ENCODE measurements at regions of chr2 and their contacts with region 1.

Region 1: DNA sequence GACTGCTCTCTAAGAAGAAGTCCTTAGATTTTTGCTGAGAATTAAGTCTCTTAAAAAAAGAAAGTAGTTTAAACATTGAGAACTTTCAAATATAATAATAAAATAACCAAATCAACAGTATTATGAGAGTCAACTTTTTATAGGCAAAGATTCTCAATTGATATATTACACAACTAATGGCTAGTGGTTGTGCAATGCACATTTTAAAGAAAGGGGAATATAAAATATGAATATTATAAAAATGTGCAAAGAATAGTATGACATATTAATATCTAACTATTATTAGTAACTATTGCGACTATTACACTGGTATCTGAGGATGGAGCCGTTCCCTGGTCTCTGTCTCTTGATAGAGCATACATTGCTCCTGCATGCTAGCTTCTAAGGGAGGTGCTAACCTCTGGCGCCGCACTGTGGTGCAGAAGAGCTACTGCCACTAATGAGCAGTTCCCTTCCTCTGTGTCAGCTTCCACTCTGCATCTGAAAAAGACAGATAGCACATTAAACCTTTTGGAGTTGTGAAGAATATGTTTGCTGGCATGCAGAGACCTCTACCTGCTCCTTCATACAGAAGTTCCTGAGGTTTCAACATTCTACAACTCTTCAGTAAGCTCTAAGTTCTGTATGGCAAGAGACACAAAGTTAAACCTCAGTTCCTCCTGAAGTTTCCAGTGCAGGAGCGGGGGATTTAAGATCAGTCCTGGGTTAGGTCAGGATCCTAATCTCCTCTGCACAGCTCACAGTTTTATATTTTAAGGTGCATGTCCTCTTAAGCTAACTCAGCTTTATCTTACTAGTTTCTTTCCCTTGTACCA is 3.5 kb upstream of the SLC9A2 start:
- DNase-seq: peak; percentile 53
- H3K4me3 ChIP-seq: no peak overlapping the region
- H3K27ac ChIP-seq: no peak overlapping the region
- H3K4me1 ChIP-seq: peaks cover 15% of the 10 kb centered on the region
- H3K27me3 ChIP-seq: no peaks in the 10 kb centered on the region
- CTCF ChIP-seq: peak; percentile 98 to 100

Region 2: GRCh38 chr2:102251042-102251848 is 364.6 kb before region 1 on chr2:
- CTCF ChIA-PET with region 1: no interaction called
- dilution Hi-C with region 1: no loop called
- in situ Hi-C with region 1: no loop called
- intact Hi-C with region 1: loop called (anchors 10 kb)
- DNase-seq: no peak
- H3K4me3 ChIP-seq: peak overlapping the region; percentile 5 to 43 (median 36)
- H3K27ac ChIP-seq: no peak overlapping the region
- H3K4me1 ChIP-seq: peaks cover 9% of the 10 kb centered on the region
- H3K27me3 ChIP-seq: no peaks in the 10 kb centered on the region
- CTCF ChIP-seq: peak; percentile 39 to 62

Region 3: DNA sequence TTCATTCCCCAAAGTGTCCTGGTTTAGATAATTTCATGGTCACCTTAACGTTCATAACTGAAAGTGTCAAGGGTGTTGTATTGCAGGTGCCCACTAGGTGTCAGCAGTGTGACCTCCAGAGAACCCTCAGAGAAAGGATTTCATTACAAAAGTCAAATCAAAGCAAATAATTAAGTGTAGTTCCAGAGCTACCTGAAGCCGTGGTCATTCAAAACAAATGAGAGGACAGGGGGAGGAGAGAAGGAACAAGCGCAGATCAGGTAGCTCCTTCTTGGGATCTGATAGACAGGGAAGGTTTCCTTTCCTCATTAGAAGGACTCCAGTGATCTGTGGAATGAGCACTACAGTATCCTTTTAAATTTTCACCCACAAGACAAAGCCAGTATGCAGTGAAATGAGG is 142.8 kb before region 1 on chr2 and contains the start of gene SLC9A4:
- CTCF ChIA-PET with region 1: interaction called, 7 read pairs
- dilution Hi-C with region 1: no loop called
- in situ Hi-C with region 1: no loop called
- intact Hi-C with region 1: loop called (anchors 1 kb)
- DNase-seq: peak; percentile 39
- H3K4me3 ChIP-seq: no peak within 1 kb of the TSS
- H3K27ac ChIP-seq: no peak within 1 kb of the TSS
- H3K4me1 ChIP-seq: no peaks in the 10 kb centered on the region
- H3K27me3 ChIP-seq: peaks cover 2% of the 10 kb centered on the region
- CTCF ChIP-seq: peak; percentile 90 to 91
- total RNA-seq, gene SLC9A4: 0.07 TPM in 1 of 2 donors, not detected in the other

Region 4: GRCh38 chr2:102585847-102586431 is 29.9 kb before region 1 on chr2:
- CTCF ChIA-PET with region 1: no interaction called
- dilution Hi-C with region 1: loop called (anchors 5 kb)
- in situ Hi-C with region 1: no loop called
- intact Hi-C with region 1: no loop called
- DNase-seq: peak; percentile 79
- H3K4me3 ChIP-seq: no peak overlapping the region
- H3K27ac ChIP-seq: no peak overlapping the region
- H3K4me1 ChIP-seq: peaks cover 10% of the 10 kb centered on the region
- H3K27me3 ChIP-seq: no peaks in the 10 kb centered on the region
- CTCF ChIP-seq: peak in 1 of 2 donors; percentile 10

Region 5: DNA sequence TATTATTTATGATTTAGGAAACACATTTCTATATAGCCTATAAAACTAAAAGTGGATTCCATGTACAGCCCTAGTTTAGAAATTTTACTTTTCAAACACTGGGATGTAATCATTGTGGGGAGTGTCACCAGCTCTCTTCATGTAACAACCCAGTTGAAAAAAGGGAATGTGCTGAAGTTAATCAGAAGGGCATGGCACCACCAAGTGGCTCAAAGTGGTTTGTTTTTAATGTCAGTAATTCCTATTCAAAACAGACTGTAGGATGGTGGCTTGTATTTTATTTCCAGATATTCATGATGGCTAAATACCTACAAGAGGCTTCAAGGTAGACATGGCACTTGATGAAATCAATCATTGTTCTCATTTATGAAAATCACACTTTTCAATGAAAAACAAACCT is 87.9 kb after region 1 on chr2:
- CTCF ChIA-PET with region 1: interaction called, 5 read pairs
- dilution Hi-C with region 1: no loop called
- in situ Hi-C with region 1: no loop called
- intact Hi-C with region 1: loop called (anchors 1 kb)
- DNase-seq: peak; percentile 50
- H3K4me3 ChIP-seq: no peak overlapping the region
- H3K27ac ChIP-seq: no peak overlapping the region
- H3K4me1 ChIP-seq: peaks cover under 1% of the 10 kb centered on the region
- H3K27me3 ChIP-seq: no peaks in the 10 kb centered on the region
- CTCF ChIP-seq: peak; percentile 55 to 70